ENCODE measurements at regions of chr3 and their contacts with region 1.

Region 1: DNA sequence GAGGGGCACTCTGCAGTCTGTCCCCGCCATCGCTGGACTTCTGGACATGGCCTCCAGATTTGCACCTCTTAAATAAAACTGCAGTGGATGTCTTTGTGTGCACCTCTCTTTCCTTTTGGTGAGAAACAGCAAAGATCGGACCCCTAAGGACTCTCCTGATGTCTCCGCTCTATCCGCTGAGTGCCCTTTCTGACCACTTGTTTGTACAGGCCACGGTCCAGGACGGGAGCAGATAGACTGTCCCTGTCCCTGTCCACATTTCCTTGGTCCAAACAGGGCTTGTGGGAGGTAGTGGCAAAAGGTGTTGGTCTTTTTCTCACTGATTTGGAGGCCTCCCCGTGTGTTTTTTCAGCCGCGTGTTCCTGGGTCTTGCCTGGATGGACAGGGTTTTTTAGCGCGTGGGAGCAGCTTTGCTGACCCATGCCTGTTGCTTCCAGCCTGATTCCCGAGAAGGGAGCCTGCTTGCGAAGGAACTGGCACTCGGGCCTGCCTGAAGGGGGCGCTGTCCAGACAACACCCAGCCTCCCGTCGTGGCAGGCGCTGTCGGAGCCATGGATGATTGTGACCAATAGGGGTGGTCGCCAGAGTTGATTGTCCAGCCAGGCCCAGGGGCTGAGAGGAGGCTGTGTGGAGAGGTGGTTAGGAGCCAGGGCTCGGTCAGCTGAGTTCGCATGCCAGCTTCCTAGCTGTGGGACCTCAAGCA is 13.2 kb upstream of the STAB1 start:
- DNase-seq: no peak

Region 2: DNA sequence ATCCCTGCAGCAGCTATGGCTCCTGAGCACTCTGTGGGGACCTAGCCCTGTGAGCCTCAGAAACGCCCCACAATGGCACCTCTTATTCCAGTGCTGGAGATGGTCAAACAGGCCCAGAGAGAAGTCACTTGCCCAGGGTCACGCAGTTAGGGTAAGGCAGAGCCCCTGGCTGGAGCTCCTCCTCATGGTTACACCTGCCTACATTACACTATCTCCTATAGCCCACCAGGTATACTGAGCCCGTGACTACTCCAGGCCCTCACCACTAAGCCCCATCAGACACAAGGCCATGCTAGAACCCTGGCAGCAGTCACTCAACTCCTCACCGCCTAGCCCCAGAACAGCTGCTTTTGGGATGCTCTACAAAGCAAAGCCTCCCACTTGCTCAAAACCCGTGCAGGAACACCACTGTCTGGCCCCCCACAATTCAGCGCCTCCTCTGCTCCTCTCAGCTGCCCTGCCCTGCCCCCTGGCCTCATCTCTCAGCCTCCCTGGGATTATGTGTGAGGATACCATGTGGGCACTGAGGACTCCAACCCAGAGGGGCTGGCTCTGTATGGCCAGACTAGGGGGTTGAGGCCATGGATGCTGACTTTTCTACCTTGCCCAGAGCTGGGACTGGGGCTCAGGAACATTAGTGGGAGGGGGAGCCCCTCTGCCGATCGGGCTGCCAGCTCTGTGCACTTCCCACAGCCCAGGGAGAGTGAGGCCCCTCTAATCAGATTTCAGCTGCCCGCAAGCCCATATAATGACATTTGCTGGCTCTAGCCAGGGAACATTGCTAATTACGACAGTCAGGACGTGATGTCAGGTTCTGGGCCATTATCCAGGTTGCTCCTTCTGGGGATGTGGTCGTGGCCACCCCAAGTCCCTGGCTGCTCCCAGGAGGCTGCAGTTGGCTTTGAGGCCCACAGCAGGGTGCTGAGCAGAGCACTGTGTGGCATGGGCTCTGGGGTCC is 47.7 kb after region 1 on chr3:
- intact Hi-C with region 1: loop called (anchors 2 kb)
- DNase-seq: peak; percentile 74